GM12878 (cell line): ENCODE measurements at regions of chr14 and their contacts with region 1.

Region 1: DNA sequence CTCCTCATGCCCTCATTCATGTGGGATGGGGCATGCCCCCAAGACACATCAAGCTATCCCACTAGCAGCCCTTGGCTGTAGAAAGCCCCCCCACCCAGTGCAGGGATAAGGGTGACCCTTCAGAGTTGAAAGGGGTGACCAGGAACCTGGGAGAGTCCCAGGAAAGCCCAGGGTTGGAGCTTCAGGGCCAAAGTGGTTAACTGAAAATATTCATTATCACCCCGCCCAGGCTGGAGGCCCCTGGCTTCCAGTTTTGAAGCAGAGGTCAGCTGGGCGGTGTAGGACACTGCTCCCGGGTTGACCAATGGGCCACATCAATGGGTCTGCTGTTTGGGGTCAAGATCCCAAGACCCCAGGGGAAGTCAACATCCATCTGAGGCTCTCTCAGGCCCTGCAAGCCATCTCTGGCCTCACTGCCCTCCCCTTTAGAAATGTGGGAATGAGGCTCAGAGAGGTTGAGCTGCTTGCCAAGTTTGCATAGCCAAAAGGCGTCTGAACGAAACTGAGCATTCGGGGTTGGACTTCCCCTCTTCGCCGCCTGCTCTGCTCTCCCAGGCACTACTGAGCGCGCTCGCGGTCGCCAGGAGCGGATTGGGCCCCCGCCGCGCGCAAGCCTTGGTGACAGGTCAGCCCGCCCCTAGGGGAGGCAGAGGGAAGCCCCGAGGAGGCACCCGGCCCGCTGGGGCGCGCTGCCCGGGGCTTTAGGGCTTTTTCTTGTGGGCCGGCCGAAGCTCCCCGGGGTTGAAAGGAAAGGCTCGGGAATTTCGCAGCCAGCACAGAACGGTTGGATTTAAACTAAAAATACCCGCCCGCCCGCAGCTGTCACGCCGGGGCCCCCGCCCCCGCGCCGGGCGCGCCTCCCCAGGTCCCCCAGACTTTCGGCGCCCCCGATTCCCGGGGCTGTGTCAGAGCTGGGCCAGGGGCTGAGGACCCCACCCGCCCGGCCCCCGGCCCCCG is 576 bp downstream of the SYNE3 start:
- DNase-seq: no peak
- ATAC-seq: peak; percentile 87
- H3K4me3 ChIP-seq: peak overlapping the region; percentile 85
- H3K27ac ChIP-seq: peak overlapping the region; percentile 90
- H3K4me1 ChIP-seq: peaks cover 53% of the 10 kb centered on the region
- H3K27me3 ChIP-seq: no peaks in the 10 kb centered on the region
- CTCF ChIP-seq: peak; percentile 35 to 58 (median 46)
- EP300 ChIP-seq: 0 out of 4 replicates have a peak, but pooled peaks of 1 of the 2 experiments have one; percentile 6
- POLR2A ChIP-seq: 0 out of 2 replicates have a peak, but pooled peaks have one; percentile 59
- RAD21 ChIP-seq: peak; percentile 44

Region 2: GRCh38 chr14:95483309-95484165 is 32.3 kb before region 1 on chr14:
- CTCF ChIA-PET with region 1: interaction called, 5 read pairs
- POLR2A ChIA-PET with region 1: interaction called, 9 read pairs
- RAD21 ChIA-PET with region 1: interaction called, 25 read pairs
- SMC1A ChIA-PET with region 1: interaction called, 10 read pairs
- in situ Hi-C with region 1: no loop called
- intact Hi-C with region 1: loop called (anchors 1 kb)
- DNase-seq: no peak
- ATAC-seq: no peak
- H3K4me3 ChIP-seq: no peak overlapping the region
- H3K27ac ChIP-seq: no peak overlapping the region
- H3K4me1 ChIP-seq: peaks cover 24% of the 10 kb centered on the region
- H3K27me3 ChIP-seq: no peaks in the 10 kb centered on the region
- CTCF ChIP-seq: no peak
- EP300 ChIP-seq: no peak
- POLR2A ChIP-seq: no peak
- RAD21 ChIP-seq: no peak

Region 3: DNA sequence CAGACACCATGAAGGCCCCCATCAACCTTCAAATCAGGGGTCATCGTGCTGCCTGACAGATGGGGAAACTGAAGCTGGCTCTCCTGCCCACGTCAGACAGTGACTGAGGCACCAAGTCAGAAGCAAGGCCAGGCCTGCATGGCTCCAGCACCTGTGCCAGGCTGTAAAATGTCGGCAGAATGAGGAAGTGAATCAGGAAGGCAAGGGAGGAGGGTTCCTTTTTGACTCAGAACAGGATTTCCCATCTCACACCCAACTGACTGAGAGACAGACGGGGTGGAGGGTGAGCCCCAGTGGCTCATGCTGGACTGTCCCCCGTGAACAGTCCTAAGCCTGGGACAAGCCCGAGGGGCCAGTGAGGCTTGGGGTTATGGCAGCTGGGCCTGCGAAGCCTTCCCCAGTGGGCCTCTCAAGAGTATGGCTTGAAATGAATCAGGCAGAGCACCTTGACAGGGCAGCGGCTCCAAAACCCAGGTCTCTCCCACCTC is 20.3 kb before region 1 on chr14:
- CTCF ChIA-PET with region 1: interaction called, 55 read pairs
- POLR2A ChIA-PET with region 1: interaction called, 276 read pairs
- RAD21 ChIA-PET with region 1: interaction called, 49 read pairs
- SMC1A ChIA-PET with region 1: interaction called, 69 read pairs
- in situ Hi-C with region 1: no loop called
- intact Hi-C with region 1: loop called (anchors 2 kb)
- DNase-seq: peak; percentile 94
- ATAC-seq: peak; percentile 90
- H3K4me3 ChIP-seq: peak overlapping the region; percentile 37; the same call in 1 of the 2 replicates
- H3K27ac ChIP-seq: peak overlapping the region; percentile 98
- H3K4me1 ChIP-seq: peaks cover 60% of the 10 kb centered on the region
- H3K27me3 ChIP-seq: no peaks in the 10 kb centered on the region
- CTCF ChIP-seq: no peak
- EP300 ChIP-seq: peak; percentile 66 to 95
- POLR2A ChIP-seq: peak; percentile 66
- RAD21 ChIP-seq: peak; percentile 17; the same call in 1 of the 2 replicates

Region 4: DNA sequence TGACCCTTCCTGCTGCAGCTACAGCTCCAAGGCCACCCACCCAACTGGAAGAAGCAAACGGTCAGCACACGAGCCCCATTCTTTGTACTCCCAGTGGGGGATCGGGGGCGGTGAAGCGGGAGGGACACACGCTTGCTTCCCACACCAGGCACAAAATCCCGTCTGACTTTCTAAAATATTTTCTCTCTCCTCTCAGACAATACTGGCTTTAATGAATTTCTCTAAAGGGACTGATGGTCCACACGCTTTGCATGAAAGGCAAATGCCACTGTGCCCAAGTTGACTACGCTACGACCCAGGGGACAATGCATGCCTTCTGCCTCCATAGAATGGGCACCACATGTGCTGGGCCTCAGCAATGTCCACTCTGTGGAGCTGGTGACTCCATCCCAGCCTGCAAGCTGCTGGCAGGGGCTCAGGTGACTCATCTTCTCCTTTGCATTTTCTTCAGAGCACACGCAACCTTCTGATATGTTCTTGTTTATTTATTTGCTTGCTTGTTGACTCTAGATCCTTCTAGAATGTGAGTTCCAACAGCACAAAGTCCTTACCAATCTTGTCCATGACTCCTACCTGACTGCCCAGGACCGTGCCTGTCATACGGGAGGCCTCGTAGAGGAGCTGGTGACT is 15.0 kb before region 1 on chr14:
- CTCF ChIA-PET with region 1: interaction called, 55 read pairs
- POLR2A ChIA-PET with region 1: interaction called, 276 read pairs
- RAD21 ChIA-PET with region 1: interaction called, 78 read pairs
- SMC1A ChIA-PET with region 1: interaction called, 107 read pairs
- in situ Hi-C with region 1: no loop called
- intact Hi-C with region 1: loop called (anchors 1 kb)
- DNase-seq: no peak
- ATAC-seq: no peak
- H3K4me3 ChIP-seq: no peak overlapping the region
- H3K27ac ChIP-seq: peak overlapping the region; percentile 15; the same call in 1 of the 2 replicates
- H3K4me1 ChIP-seq: peaks cover 90% of the 10 kb centered on the region
- H3K27me3 ChIP-seq: no peaks in the 10 kb centered on the region
- CTCF ChIP-seq: no peak
- EP300 ChIP-seq: no peak
- POLR2A ChIP-seq: no peak
- RAD21 ChIP-seq: no peak

Region 5: DNA sequence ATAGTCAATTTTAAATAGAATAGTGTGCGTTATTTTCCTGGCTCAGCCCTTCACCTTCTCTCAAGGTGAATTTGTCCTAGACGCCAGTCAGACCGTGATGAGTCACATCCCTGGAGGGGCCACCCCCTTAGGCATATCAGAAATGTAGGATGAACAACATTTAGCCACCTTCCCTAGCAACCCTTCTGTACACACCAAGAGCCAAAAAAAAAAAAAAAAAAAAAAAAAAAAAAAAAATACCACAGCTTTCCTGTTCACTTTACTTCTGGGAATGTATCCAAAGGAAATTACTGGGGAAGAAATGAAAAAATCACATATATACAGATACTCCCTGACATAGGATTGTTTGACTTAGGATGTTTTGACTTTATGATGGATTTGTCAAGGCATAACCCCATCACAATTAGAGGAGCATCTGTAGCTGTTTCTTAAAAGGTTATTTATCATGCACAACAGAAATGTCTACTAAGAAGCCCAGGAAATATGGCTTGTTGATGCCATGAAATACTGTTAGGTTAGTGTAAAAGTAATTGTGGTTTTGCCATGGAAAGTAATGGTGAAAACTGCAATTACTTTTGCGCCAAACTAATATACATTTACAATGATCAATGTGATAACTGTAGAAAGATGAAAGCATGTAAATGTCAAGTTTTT is 620.6 kb after region 1 on chr14:
- CTCF ChIA-PET with region 1: no interaction called
- POLR2A ChIA-PET with region 1: no interaction called
- RAD21 ChIA-PET with region 1: no interaction called
- SMC1A ChIA-PET with region 1: no interaction called
- in situ Hi-C with region 1: no loop called
- intact Hi-C with region 1: no loop called
- DNase-seq: no peak
- ATAC-seq: no peak
- H3K4me3 ChIP-seq: no peak overlapping the region
- H3K27ac ChIP-seq: no peak overlapping the region
- H3K4me1 ChIP-seq: no peaks in the 10 kb centered on the region
- H3K27me3 ChIP-seq: no peaks in the 10 kb centered on the region; a peak in 1 of 4 replicates
- CTCF ChIP-seq: no peak
- EP300 ChIP-seq: no peak
- POLR2A ChIP-seq: no peak
- RAD21 ChIP-seq: no peak